MCF 10A (cell line): ENCODE measurements at regions of chr7 and their contacts with region 1.

Region 1: GRCh38 chr7:82729172-82730030 is 285.8 kb upstream of the CACNA2D1 start:
- DNase-seq: peak; percentile 38
- H3K4me3 Mint-ChIP-seq: no peak overlapping the region
- H3K27ac Mint-ChIP-seq: no peak overlapping the region
- H3K4me1 Mint-ChIP-seq: no peaks in the 10 kb centered on the region
- H3K27me3 Mint-ChIP-seq: no peaks in the 10 kb centered on the region
- CTCF ChIP-seq: peak; percentile 68

Region 2: GRCh38 chr7:82044497-82045080 is 684.8 kb before region 1 on chr7:
- CTCF ChIA-PET with region 1: interaction called, 38 read pairs
- POLR2A ChIA-PET with region 1: no interaction called
- intact Hi-C with region 1: loop called (anchors 2 kb)
- DNase-seq: peak; percentile 54
- H3K4me3 Mint-ChIP-seq: no peak overlapping the region
- H3K27ac Mint-ChIP-seq: no peak overlapping the region
- H3K4me1 Mint-ChIP-seq: no peaks in the 10 kb centered on the region
- H3K27me3 Mint-ChIP-seq: peaks cover 73% of the 10 kb centered on the region
- CTCF ChIP-seq: peak; percentile 66

Region 3: GRCh38 chr7:82172017-82172416 is 557.4 kb before region 1 on chr7:
- CTCF ChIA-PET with region 1: no interaction called
- POLR2A ChIA-PET with region 1: no interaction called
- intact Hi-C with region 1: loop called (anchors 5 kb)
- DNase-seq: no peak
- H3K4me3 Mint-ChIP-seq: no peak overlapping the region
- H3K27ac Mint-ChIP-seq: no peak overlapping the region
- H3K4me1 Mint-ChIP-seq: no peaks in the 10 kb centered on the region
- H3K27me3 Mint-ChIP-seq: peaks cover 50% of the 10 kb centered on the region
- CTCF ChIP-seq: peak; percentile 26

Region 4: GRCh38 chr7:82234457-82235049 is 494.8 kb before region 1 on chr7:
- CTCF ChIA-PET with region 1: no interaction called
- POLR2A ChIA-PET with region 1: no interaction called
- intact Hi-C with region 1: loop called (anchors 1 kb)
- DNase-seq: peak; percentile 49
- H3K4me3 Mint-ChIP-seq: no peak overlapping the region
- H3K27ac Mint-ChIP-seq: no peak overlapping the region
- H3K4me1 Mint-ChIP-seq: no peaks in the 10 kb centered on the region
- H3K27me3 Mint-ChIP-seq: peaks cover 92% of the 10 kb centered on the region
- CTCF ChIP-seq: peak; percentile 36

Region 5: GRCh38 chr7:82481499-82482097 is 247.8 kb before region 1 on chr7:
- CTCF ChIA-PET with region 1: interaction called, 3 read pairs
- POLR2A ChIA-PET with region 1: no interaction called
- intact Hi-C with region 1: loop called (anchors 10 kb)
- DNase-seq: peak; percentile 26
- H3K4me3 Mint-ChIP-seq: no peak overlapping the region
- H3K27ac Mint-ChIP-seq: no peak overlapping the region
- H3K4me1 Mint-ChIP-seq: no peaks in the 10 kb centered on the region
- H3K27me3 Mint-ChIP-seq: peaks cover 20% of the 10 kb centered on the region
- CTCF ChIP-seq: peak; percentile 59

Region 6: DNA sequence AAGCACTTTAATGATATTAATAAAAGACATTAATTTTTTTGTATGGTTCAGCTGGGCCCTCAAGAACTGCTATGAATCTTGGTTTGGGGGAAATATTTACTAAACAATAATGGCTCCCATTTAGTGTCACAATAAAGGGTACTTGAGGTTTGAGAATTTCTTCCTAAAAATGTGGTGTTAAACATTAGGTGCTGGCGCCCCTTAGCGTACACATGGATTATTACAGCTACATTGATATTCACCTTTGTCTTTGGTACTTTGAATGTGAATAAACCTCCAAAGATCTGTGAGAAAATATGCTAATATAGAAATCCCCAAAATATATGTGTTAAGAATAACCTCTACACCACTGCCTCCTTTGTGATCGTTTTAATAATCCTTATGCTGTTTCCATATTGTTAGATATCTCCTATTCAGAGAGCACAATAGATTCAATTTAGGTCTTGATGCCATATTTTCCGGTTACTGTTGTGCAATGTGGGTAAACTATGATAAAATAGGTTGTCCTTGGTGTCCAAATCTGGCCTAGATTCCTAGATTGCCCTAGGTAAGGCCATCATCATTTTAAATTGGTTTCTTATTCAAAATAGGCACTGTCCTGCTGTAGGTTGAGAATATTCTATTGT is 124.0 kb before region 1 on chr7:
- CTCF ChIA-PET with region 1: interaction called, 4 read pairs
- POLR2A ChIA-PET with region 1: no interaction called
- intact Hi-C with region 1: loop called (anchors 2 kb)
- DNase-seq: peak; percentile 48
- H3K4me3 Mint-ChIP-seq: no peak overlapping the region
- H3K27ac Mint-ChIP-seq: no peak overlapping the region
- H3K4me1 Mint-ChIP-seq: no peaks in the 10 kb centered on the region
- H3K27me3 Mint-ChIP-seq: peaks cover 28% of the 10 kb centered on the region
- CTCF ChIP-seq: peak; percentile 54